Common myeloid progenitor, CD34-positive (primary cell): ENCODE measurements at regions of chr2 and their contacts with region 1.

Region 1: DNA sequence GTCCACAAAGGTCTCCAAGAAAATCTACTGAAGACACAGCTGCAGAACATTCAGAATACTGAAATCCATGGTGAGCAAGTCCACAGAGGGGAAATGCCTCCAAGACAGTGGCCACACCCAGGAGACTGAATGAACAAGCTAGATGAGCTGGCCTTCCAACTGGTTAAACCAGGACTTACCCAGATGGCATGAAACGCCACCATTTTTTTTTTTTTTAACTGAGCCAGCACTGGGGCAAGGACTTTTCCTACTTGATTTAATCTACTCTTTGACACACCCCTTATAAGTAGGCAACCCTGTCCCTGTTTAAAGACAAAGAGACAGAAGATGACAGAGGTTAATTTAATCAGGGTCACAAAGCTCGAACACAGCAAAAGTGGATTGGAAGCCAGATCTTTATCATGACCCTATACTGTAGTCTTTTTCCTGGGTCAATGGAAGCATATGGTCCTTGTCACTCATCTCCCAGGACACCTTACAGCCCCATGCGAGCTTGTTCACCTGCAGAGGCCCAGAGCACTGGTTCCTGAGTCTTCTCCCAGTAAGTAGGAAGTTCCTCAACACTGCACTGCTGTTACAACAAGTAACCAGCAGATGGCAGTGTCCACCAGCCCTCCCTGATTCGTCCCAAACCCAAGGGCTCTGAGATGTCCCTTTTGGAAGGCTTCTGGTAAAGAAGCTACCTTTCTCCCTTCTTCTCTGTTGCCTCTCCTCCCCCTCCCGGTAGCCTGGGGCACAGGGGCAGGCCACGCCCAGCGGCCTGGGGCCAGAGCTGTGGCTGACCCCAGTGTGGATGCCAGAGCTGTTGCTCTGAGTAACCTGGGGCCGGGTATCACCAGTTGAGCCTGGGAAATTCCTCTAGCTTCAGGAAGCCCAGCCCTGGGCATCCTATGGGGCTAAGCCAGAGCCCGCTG is 5.6 kb upstream of the GDF7 start:
- DNase-seq: peak; percentile 73 to 82 (median 73)
- H3K4me3 ChIP-seq: no peak overlapping the region
- H3K27ac ChIP-seq: no peak overlapping the region
- H3K4me1 ChIP-seq: peaks cover 0 to 14% (median 11%) of the 10 kb centered on the region in 4 experiments
- H3K27me3 ChIP-seq: peaks cover 3 to 57% (median 39%) of the 10 kb centered on the region in 5 experiments

Region 2: DNA sequence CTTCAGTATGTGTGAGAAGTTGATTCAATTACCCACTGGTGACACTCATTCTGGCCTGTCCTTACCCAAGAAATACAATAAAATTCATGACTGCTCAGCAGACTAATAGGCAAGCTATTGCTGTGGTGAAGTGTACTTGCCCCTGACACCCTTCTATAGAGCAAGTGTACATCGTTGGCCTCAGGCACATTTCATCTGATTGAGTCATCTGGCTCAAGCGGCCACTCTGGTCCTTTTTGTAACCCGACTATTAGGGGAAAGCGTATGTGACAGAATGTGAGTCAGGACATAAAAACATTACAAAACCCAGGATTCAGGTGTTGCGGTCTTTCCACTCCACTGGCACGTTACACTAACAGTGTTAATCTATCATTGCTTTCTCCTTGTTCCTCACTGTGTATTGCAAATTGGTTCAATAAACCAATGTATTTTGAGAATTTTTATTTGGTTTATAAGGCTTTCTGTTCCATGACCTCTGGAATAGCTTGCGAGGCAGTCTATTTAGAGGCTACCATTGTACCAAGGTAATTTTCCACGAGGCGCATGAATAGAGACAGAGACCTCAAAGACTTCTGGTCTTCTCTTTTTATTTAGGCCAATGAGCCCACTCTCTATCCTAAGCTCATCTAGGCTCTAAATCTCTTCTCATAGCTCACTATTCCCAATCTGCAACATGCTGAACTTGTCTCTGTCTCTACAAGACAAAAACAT is 749.4 kb before region 1 on chr2:
- CTCF ChIA-PET with region 1: no interaction called
- POLR2A ChIA-PET with region 1: no interaction called
- DNase-seq: no peak
- H3K4me3 ChIP-seq: no peak overlapping the region
- H3K27ac ChIP-seq: no peak overlapping the region
- H3K4me1 ChIP-seq: no peaks in the 10 kb centered on the region
- H3K27me3 ChIP-seq: no peaks in the 10 kb centered on the region

Region 3: GRCh38 chr2:20611077-20611843 is 50.1 kb before region 1 on chr2:
- CTCF ChIA-PET with region 1: no interaction called
- POLR2A ChIA-PET with region 1: no interaction called
- DNase-seq: peak in 1 of 3 donors; percentile 25
- H3K4me3 ChIP-seq: peak overlapping the region in 1 of 7 experiments; percentile 7
- H3K27ac ChIP-seq: no peak overlapping the region
- H3K4me1 ChIP-seq: peaks cover 0 to 20% (median 2%) of the 10 kb centered on the region in 4 experiments
- H3K27me3 ChIP-seq: no peaks in the 10 kb centered on the region

Region 4: GRCh38 chr2:20650880-20651730 is 10.2 kb before region 1 on chr2 and contains the start of gene HS1BP3:
- CTCF ChIA-PET with region 1: interaction called, 48 read pairs
- POLR2A ChIA-PET with region 1: no interaction called
- DNase-seq: peak; percentile 83 to 91 (median 91)
- H3K4me3 ChIP-seq: peak within 1 kb of the TSS; percentile 74 to 89 (median 81)
- H3K27ac ChIP-seq: peak within 1 kb of the TSS; percentile 64 to 88
- H3K4me1 ChIP-seq: peaks cover 2 to 29% (median 19%) of the 10 kb centered on the region in 4 experiments
- H3K27me3 ChIP-seq: no peaks in the 10 kb centered on the region

Region 5: GRCh38 chr2:20675701-20676352 is 14.5 kb after region 1 on chr2:
- CTCF ChIA-PET with region 1: interaction called, 107 read pairs
- POLR2A ChIA-PET with region 1: no interaction called
- DNase-seq: peak in 2 of 3 donors; percentile 59 to 61
- H3K4me3 ChIP-seq: no peak overlapping the region
- H3K27ac ChIP-seq: no peak overlapping the region
- H3K4me1 ChIP-seq: peaks cover 0 to 21% (median 9%) of the 10 kb centered on the region in 4 experiments
- H3K27me3 ChIP-seq: peaks cover 0 to 39% (median 20%) of the 10 kb centered on the region in 5 experiments

Region 6: GRCh38 chr2:20691076-20691734 is 29.9 kb after region 1 on chr2:
- CTCF ChIA-PET with region 1: interaction called, 14 read pairs
- POLR2A ChIA-PET with region 1: no interaction called
- DNase-seq: no peak
- H3K4me3 ChIP-seq: no peak overlapping the region
- H3K27ac ChIP-seq: no peak overlapping the region
- H3K4me1 ChIP-seq: peaks cover 0 to 31% (median 2%) of the 10 kb centered on the region in 4 experiments
- H3K27me3 ChIP-seq: no peaks in the 10 kb centered on the region